K562 (cell line): ENCODE measurements at regions of chr5 and their contacts with region 1.

Region 1: GRCh38 chr5:171840066-171840465 is 54.4 kb downstream of the SMIM23 start:
- DNase-seq: peak; percentile 7 to 62 (median 46)
- ATAC-seq: peak; percentile 70
- H3K4me3 ChIP-seq: no peak overlapping the region
- H3K27ac ChIP-seq: no peak overlapping the region
- H3K4me1 ChIP-seq: peaks cover 14 to 17% of the 10 kb centered on the region in 2 experiments; a peak in 4 of 5 replicates
- H3K27me3 ChIP-seq: peaks cover under 1 to 10% of the 10 kb centered on the region in 2 experiments; a peak in 3 of 5 replicates
- CTCF ChIP-seq: no peak
- EP300 ChIP-seq: no peak
- POLR2A ChIP-seq: no peak
- RAD21 ChIP-seq: no peak

Region 2: DNA sequence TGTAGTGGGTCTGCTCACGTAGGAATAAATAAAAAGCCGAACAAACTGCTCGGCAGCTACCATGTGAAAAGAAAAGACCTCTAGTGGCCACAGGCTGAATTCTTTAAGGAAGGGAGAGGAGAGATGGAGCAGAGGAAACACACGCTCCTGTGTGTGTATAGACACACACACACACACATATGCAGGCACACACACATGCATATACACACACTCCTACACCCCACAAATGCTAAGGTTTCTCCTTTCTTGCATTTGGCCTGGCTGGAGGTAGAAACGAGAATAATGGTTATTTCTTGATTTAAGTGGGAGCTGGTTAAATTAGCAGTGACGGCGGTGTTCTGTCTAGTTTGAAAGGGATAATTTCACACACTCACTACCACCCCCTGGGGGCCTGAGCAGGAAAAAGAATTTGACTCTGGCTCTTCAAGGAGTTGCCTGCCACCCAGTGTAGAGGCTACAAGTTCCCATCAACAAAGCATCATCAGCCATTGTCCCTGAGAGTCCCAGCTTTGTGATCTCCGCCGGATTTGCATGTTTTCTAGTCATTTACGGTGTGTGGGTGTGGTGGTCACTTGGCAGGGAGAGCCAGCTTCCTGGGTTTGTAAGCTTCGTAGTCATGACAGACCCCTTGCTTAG is 1859.5 kb before region 1 on chr5 and contains the start of gene INSYN2B:
- CTCF ChIA-PET with region 1: no interaction called
- POLR2A ChIA-PET with region 1: no interaction called
- in situ Hi-C with region 1: no loop called
- intact Hi-C with region 1: no loop called
- DNase-seq: peak; percentile 65 to 71 (median 68)
- ATAC-seq: peak; percentile 97
- H3K4me3 ChIP-seq: no peak within 1 kb of the TSS
- H3K27ac ChIP-seq: no peak within 1 kb of the TSS
- H3K4me1 ChIP-seq: no peaks in the 10 kb centered on the region; a peak in 1 of 5 replicates
- H3K27me3 ChIP-seq: no peaks in the 10 kb centered on the region; a peak in 1 of 5 replicates
- CTCF ChIP-seq: peak; percentile 67 to 98 (median 84)
- EP300 ChIP-seq: no peak
- POLR2A ChIP-seq: no peak
- RAD21 ChIP-seq: peak; percentile 42 to 75
- polyA plus RNA-seq, gene INSYN2B: not detected

Region 3: GRCh38 chr5:171823269-171823668 is 16.8 kb before region 1 on chr5:
- CTCF ChIA-PET with region 1: no interaction called
- POLR2A ChIA-PET with region 1: interaction called, 11 read pairs
- in situ Hi-C with region 1: no loop called
- intact Hi-C with region 1: no loop called
- DNase-seq: no peak
- ATAC-seq: no peak
- H3K4me3 ChIP-seq: no peak overlapping the region
- H3K27ac ChIP-seq: no peak overlapping the region
- H3K4me1 ChIP-seq: no peaks in the 10 kb centered on the region
- H3K27me3 ChIP-seq: peaks cover 3 to 38% of the 10 kb centered on the region in 2 experiments; a peak in 4 of 5 replicates
- CTCF ChIP-seq: no peak
- EP300 ChIP-seq: no peak
- POLR2A ChIP-seq: no peak
- RAD21 ChIP-seq: no peak